AG04450 (cell line): ENCODE measurements at regions of chr3 and their contacts with region 1.

Region 1: GRCh38 chr3:184005941-184006507 is 11.7 kb downstream of the ABCC5 start:
- DNase-seq: no peak
- H3K4me3 ChIP-seq: no peak overlapping the region
- H3K27ac ChIP-seq: no peak overlapping the region
- H3K27me3 ChIP-seq: no peaks in the 10 kb centered on the region
- CTCF ChIP-seq: no peak

Region 2: GRCh38 chr3:184017672-184018423 is 11.8 kb after region 1 on chr3 and contains the start of gene ABCC5:
- CTCF ChIA-PET with region 1: interaction called, 19 read pairs
- POLR2A ChIA-PET with region 1: interaction called, 4 read pairs
- DNase-seq: peak; percentile 81
- H3K4me3 ChIP-seq: peak within 1 kb of the TSS; percentile 100
- H3K27ac ChIP-seq: peak within 1 kb of the TSS; percentile 31
- H3K27me3 ChIP-seq: peaks cover 3% of the 10 kb centered on the region
- CTCF ChIP-seq: 0 out of 2 replicates have a peak, but pooled peaks have one; percentile 1
- polyA plus RNA-seq, gene ABCC5: 27.4 and 30.6 TPM in 2 replicates